ENCODE measurements at regions of chr10 and their contacts with region 1.

Region 1: DNA sequence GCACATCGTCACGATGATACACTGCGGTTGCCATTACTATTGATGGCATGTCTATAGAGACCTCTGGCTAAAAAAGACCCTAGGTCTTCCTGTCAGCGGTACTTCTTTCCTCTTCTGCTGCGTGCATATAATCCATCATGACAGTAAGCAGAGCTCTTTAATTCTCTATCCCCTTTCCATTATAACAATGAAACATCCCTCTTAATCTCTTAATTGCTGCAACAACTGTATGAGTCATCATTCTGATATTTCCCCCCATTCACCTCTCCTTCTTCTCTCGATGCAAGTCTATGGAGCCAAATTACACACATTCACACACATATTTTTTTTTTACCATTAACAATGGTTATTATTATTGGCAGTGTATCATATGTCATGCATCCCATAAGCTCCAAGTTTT is 45.2 kb upstream of the AKR1E2 start:
- DNase-seq: peak; percentile 21
- H3K4me3 ChIP-seq: peak overlapping the region in 1 of 2 experiments; percentile 20; a peak in 1 of 4 replicates
- H3K27ac ChIP-seq: peak overlapping the region; percentile 80 to 100; a peak in 3 of 4 replicates
- H3K4me1 ChIP-seq: peaks cover 3 to 44% of the 10 kb centered on the region in 2 experiments
- H3K27me3 ChIP-seq: no peaks in the 10 kb centered on the region
- CTCF ChIP-seq: no peak
- EP300 ChIP-seq: peak; percentile 46 to 62; a peak in 2 of 4 replicates
- RAD21 ChIP-seq: no peak

Region 2: GRCh38 chr10:4767033-4767814 is 13.6 kb before region 1 on chr10:
- CTCF ChIA-PET with region 1: interaction called, 10 read pairs
- POLR2A ChIA-PET with region 1: no interaction called
- DNase-seq: peak; percentile 31
- H3K4me3 ChIP-seq: no peak overlapping the region
- H3K27ac ChIP-seq: peak overlapping the region; percentile 78 to 100
- H3K4me1 ChIP-seq: peaks cover 11 to 62% of the 10 kb centered on the region in 2 experiments
- H3K27me3 ChIP-seq: no peaks in the 10 kb centered on the region
- CTCF ChIP-seq: peak; percentile 86
- EP300 ChIP-seq: no peak
- RAD21 ChIP-seq: peak; percentile 89